SK-N-SH (cell line): ENCODE measurements at regions of chr11 and their contacts with region 1.

Region 1: GRCh38 chr11:44538375-44539054 is 26.9 kb upstream of the CD82 start:
- DNase-seq: peak; percentile 90
- H3K4me3 ChIP-seq: peak overlapping the region in 1 of 2 experiments; percentile 17; a peak in 1 of 4 replicates
- H3K27ac ChIP-seq: no peak overlapping the region
- H3K4me1 ChIP-seq: peaks cover 0 to 2% of the 10 kb centered on the region in 2 experiments; a peak in 1 of 4 replicates
- H3K27me3 ChIP-seq: no peaks in the 10 kb centered on the region
- CTCF ChIP-seq: peak; percentile 93
- EP300 ChIP-seq: no peak
- RAD21 ChIP-seq: peak; percentile 99

Region 2: GRCh38 chr11:44237156-44237555 is 301.4 kb before region 1 on chr11:
- CTCF ChIA-PET with region 1: no interaction called
- POLR2A ChIA-PET with region 1: no interaction called
- DNase-seq: no peak
- H3K4me3 ChIP-seq: no peak overlapping the region
- H3K27ac ChIP-seq: no peak overlapping the region
- H3K4me1 ChIP-seq: no peaks in the 10 kb centered on the region
- H3K27me3 ChIP-seq: no peaks in the 10 kb centered on the region
- CTCF ChIP-seq: no peak
- EP300 ChIP-seq: no peak
- RAD21 ChIP-seq: no peak

Region 3: GRCh38 chr11:44524751-44525201 is 13.7 kb before region 1 on chr11:
- CTCF ChIA-PET with region 1: interaction called, 19 read pairs
- POLR2A ChIA-PET with region 1: no interaction called
- DNase-seq: no peak
- H3K4me3 ChIP-seq: no peak overlapping the region
- H3K27ac ChIP-seq: no peak overlapping the region
- H3K4me1 ChIP-seq: no peaks in the 10 kb centered on the region; a peak in 1 of 4 replicates
- H3K27me3 ChIP-seq: no peaks in the 10 kb centered on the region
- CTCF ChIP-seq: no peak
- EP300 ChIP-seq: no peak
- RAD21 ChIP-seq: no peak

Region 4: GRCh38 chr11:44564166-44564565 is 25.7 kb after region 1 on chr11:
- CTCF ChIA-PET with region 1: no interaction called
- POLR2A ChIA-PET with region 1: no interaction called
- DNase-seq: no peak
- H3K4me3 ChIP-seq: peak overlapping the region in 1 of 2 experiments; percentile 64; a peak in 2 of 4 replicates
- H3K27ac ChIP-seq: peak overlapping the region; percentile 89
- H3K4me1 ChIP-seq: peaks cover 23 to 30% of the 10 kb centered on the region in 2 experiments
- H3K27me3 ChIP-seq: no peaks in the 10 kb centered on the region
- CTCF ChIP-seq: no peak
- EP300 ChIP-seq: no peak
- RAD21 ChIP-seq: no peak

Region 5: GRCh38 chr11:44578279-44578678 is 39.8 kb after region 1 on chr11:
- CTCF ChIA-PET with region 1: no interaction called
- POLR2A ChIA-PET with region 1: no interaction called
- DNase-seq: no peak
- H3K4me3 ChIP-seq: no peak overlapping the region
- H3K27ac ChIP-seq: no peak overlapping the region
- H3K4me1 ChIP-seq: peaks cover 21% of the 10 kb centered on the region in 2 experiments; a peak in 3 of 4 replicates
- H3K27me3 ChIP-seq: no peaks in the 10 kb centered on the region
- CTCF ChIP-seq: no peak
- EP300 ChIP-seq: no peak
- RAD21 ChIP-seq: no peak

Region 6: GRCh38 chr11:44658506-44658850 is 120.0 kb after region 1 on chr11:
- CTCF ChIA-PET with region 1: no interaction called
- POLR2A ChIA-PET with region 1: no interaction called
- DNase-seq: peak; percentile 68
- H3K4me3 ChIP-seq: no peak overlapping the region
- H3K27ac ChIP-seq: no peak overlapping the region
- H3K4me1 ChIP-seq: peaks cover 0 to 14% of the 10 kb centered on the region in 2 experiments; a peak in 1 of 4 replicates
- H3K27me3 ChIP-seq: peaks cover 4% of the 10 kb centered on the region; the same call in 1 of the 2 replicates
- CTCF ChIP-seq: peak; percentile 22; the same call in 1 of the 2 replicates
- EP300 ChIP-seq: no peak
- RAD21 ChIP-seq: peak; percentile 68